A549 (cell line): ENCODE measurements at regions of chr10 and their contacts with region 1.

Region 1: GRCh38 chr10:31871266-31872065 is 57.2 kb downstream of the ARHGAP12 start:
- DNase-seq: no peak
- ATAC-seq: peak; percentile 50 to 55; a peak in 4 of 6 replicates
- H3K4me3 ChIP-seq: no peak overlapping the region
- H3K27ac ChIP-seq: peak overlapping the region in 1 of 2 experiments; percentile 49; a peak in 3 of 6 replicates
- H3K4me1 ChIP-seq: peaks cover 79% of the 10 kb centered on the region
- CTCF ChIP-seq: no peak
- EP300 ChIP-seq: no peak
- POLR2A ChIP-seq: no peak
- RAD21 ChIP-seq: no peak

Region 2: DNA sequence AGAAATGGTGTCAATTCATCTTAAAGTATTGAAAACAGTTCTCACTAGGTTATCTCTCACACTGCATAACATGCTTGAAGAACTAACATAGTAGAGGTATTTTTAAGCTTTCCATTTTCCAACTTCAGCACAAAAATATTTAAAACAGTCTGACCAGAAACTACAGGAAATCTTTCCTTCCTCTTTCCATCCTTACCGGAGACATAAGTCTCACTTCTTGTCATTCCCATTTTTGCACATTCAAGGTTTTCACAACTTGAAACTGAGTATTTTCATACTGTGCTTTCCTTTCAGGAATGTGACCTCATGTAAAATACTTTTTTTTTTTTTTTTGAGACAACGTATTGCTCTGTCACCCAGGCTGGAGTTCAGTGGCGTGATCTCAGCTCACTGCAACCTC is 11.9 kb after region 1 on chr10:
- CTCF ChIA-PET with region 1: interaction called, 12 read pairs
- POLR2A ChIA-PET with region 1: interaction called, 4 read pairs
- DNase-seq: no peak
- ATAC-seq: 0 out of 6 replicates have a peak, but pooled peaks of 1 of the 2 experiments have one; percentile 6
- H3K4me3 ChIP-seq: no peak overlapping the region
- H3K27ac ChIP-seq: peak overlapping the region; percentile 81 to 89
- H3K4me1 ChIP-seq: peaks cover 92% of the 10 kb centered on the region
- CTCF ChIP-seq: no peak
- EP300 ChIP-seq: no peak
- POLR2A ChIP-seq: no peak
- RAD21 ChIP-seq: no peak